ENCODE measurements at regions of chr6 and their contacts with region 1.

Region 1: GRCh38 chr6:33425668-33426577 is 6.1 kb downstream of the SYNGAP1 start:
- DNase-seq: peak in 1 of 2 experiments; percentile 93
- H3K4me3 ChIP-seq: peak overlapping the region; percentile 40 to 70 (median 55)
- H3K27ac ChIP-seq: peak overlapping the region; percentile 69; the same call in 1 of the 2 replicates
- H3K4me1 ChIP-seq: peaks cover 6 to 49% (median 19%) of the 10 kb centered on the region in 4 experiments
- H3K27me3 ChIP-seq: no peaks in the 10 kb centered on the region
- CTCF ChIP-seq: peak in 2 of 3 experiments; percentile 61 to 63; a peak in 3 of 4 replicates
- EP300 ChIP-seq: no peak
- POLR2A ChIP-seq: peak in 1 of 2 experiments; percentile 40; a peak in 1 of 3 replicates
- RAD21 ChIP-seq: peak; percentile 62 to 64

Region 2: DNA sequence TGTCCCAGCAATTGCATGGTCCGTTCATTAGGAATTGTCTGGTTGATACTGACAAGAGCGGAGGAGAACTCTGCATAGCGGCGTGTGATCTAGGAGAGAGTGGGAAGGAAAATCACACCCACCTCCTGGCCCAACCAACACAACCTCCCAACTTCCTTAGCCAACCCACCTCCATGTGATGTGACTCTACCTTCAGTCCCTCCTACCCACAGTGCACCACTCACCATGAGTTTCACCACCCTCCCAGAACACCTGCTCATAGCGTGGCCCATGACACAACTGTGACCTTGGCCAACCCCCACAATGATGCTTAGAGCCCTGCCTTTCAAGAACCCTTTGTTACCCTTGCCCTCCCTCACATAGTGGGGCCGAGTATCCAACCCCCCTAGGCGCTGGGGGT is 161.9 kb before region 1 on chr6:
- CTCF ChIA-PET with region 1: no interaction called
- POLR2A ChIA-PET with region 1: no interaction called
- DNase-seq: no peak
- H3K4me3 ChIP-seq: no peak overlapping the region
- H3K27ac ChIP-seq: no peak overlapping the region
- H3K4me1 ChIP-seq: no peaks in the 10 kb centered on the region
- H3K27me3 ChIP-seq: no peaks in the 10 kb centered on the region
- CTCF ChIP-seq: no peak
- EP300 ChIP-seq: no peak
- POLR2A ChIP-seq: no peak
- RAD21 ChIP-seq: no peak

Region 3: DNA sequence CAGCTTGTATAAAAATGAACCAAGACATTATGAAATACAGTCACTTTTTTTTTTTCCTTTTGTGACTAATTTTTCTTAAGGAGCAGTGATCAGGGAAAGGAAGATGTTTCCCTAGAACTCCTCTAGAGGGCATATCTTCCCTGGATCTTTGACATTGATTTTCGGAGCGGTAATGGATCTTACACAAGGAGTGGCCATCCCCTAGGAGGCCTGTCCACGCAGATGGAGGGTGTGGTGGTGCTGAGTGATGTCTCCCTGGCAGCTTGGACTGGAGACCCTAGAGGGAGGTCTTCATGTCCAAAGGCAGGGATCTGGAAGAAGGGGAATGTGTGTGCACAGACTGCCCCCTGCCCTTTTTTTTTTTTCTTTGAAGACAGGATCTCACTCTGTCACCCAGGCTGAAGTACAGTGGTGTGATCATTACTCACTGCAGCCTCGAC is 41.3 kb before region 1 on chr6:
- CTCF ChIA-PET with region 1: interaction called, 10 read pairs
- POLR2A ChIA-PET with region 1: interaction called, 5 read pairs
- DNase-seq: no peak
- H3K4me3 ChIP-seq: no peak overlapping the region
- H3K27ac ChIP-seq: no peak overlapping the region
- H3K4me1 ChIP-seq: no peaks in the 10 kb centered on the region
- H3K27me3 ChIP-seq: no peaks in the 10 kb centered on the region
- CTCF ChIP-seq: peak; percentile 4 to 50 (median 47)
- EP300 ChIP-seq: no peak
- POLR2A ChIP-seq: no peak
- RAD21 ChIP-seq: peak; percentile 34 to 46; a peak in 3 of 4 replicates

Region 4: DNA sequence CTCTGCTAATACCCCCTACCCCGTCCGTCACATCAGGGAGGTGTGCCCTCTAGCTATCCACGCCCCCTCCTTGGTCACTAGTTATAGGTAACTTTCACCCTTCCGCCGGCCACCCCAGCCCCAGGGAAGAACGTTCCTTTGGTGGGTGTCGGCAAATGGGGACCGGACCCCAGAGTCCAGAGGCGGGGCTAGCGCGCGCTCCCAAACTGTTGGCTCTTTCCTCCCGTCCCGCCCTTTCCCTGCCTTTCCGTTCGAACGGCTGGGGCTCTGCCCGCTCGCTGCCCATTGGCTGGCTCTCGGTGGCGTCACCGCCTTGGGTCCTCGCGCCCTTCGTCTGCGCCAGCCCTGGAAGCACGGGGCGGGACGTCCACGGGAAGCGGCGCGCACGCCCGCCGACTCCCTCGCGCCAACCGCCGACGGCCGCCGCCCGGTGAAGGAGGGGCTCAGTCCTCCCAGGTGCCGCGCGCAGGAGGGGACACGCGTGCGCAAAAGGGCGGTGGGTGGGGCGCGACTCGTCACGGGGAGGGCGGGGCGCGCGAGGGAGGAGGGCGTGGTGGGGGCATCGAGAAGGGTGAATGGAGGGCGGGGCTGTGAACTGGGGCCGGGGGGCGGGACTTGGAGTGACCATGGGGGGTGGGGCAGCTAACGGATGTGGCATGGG is 15.7 kb before region 1 on chr6:
- CTCF ChIA-PET with region 1: interaction called, 37 read pairs
- POLR2A ChIA-PET with region 1: interaction called, 24 read pairs
- DNase-seq: peak; percentile 89 to 97
- H3K4me3 ChIP-seq: peak overlapping the region; percentile 45 to 87 (median 59)
- H3K27ac ChIP-seq: peak overlapping the region; percentile 52
- H3K4me1 ChIP-seq: peaks cover 0 to 6% (median 2%) of the 10 kb centered on the region in 4 experiments; a peak in 5 of 7 replicates
- H3K27me3 ChIP-seq: no peaks in the 10 kb centered on the region
- CTCF ChIP-seq: no peak
- EP300 ChIP-seq: peak in 1 of 2 experiments; percentile 49; a peak in 1 of 3 replicates
- POLR2A ChIP-seq: no peak
- RAD21 ChIP-seq: no peak

Region 5: DNA sequence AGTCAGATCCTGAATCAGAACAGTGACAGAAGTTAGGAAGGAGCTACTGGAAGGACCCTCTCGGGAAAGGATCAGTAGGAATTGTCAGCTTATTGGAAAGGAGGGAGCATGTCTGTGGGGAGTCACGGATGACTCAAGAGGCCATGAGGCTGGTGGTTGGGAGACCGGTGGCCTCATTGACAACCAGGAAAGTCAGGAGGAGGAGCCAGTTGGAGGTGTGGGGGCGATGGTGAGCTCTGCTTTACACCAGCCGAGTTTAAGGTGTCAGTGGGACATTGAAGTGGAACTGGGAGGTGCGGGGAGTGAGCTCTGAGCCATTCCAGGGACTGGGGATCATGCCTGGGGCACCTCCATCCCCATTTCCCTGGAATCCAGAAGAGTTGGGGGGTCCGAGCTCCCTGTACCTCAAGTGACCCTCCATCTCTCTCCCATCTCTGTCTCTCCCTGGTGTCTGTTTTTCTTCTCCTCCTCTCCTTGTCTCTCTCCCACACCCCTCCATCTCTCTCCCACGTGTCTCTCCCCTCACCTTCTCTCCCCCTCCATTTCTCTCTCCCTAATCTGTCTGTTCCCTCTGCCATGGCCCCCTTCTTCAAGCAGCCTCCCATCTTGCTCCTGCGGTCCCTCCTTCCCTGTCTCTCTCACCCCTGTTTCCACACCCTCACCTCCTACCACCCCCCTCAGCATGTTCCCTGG is 14.2 kb after region 1 on chr6:
- CTCF ChIA-PET with region 1: interaction called, 22 read pairs
- POLR2A ChIA-PET with region 1: interaction called, 381 read pairs
- DNase-seq: no peak
- H3K4me3 ChIP-seq: no peak overlapping the region
- H3K27ac ChIP-seq: no peak overlapping the region
- H3K4me1 ChIP-seq: no peaks in the 10 kb centered on the region; a peak in 1 of 7 replicates
- H3K27me3 ChIP-seq: no peaks in the 10 kb centered on the region
- CTCF ChIP-seq: no peak
- EP300 ChIP-seq: no peak
- POLR2A ChIP-seq: peak in 1 of 2 experiments; percentile 54; a peak in 1 of 3 replicates
- RAD21 ChIP-seq: no peak